CD4-positive, alpha-beta memory T cell (primary cell): ENCODE measurements at regions of chr7 and their contacts with region 1.

Region 1: DNA sequence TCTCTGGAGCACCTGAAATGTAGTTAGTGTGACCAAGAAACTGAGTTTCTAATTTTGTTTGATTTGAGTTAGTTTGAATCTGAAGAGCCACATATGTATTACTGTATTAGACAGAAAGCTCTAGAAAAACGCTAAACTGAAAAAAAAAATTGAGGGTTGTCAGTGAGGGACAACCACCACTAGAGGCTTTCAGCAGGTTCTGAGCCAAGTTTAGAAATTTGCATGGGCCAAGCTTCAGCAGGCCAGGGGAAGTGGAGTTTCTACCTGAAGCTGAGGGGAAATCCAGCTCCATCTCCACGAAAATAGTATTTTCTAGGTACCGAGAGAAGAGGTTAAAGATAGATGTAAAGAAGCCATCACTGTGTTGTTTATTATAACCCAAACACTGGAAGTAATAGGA is 77.9 kb upstream of the PLXNA4 start:
- DNase-seq: peak in 1 of 5 donors; percentile 17
- H3K4me3 ChIP-seq: no peak overlapping the region
- H3K4me3 Mint-ChIP-seq: peak overlapping the region in 7 of 8 donors; percentile 27 to 78 (median 70)
- H3K27ac ChIP-seq: no peak overlapping the region
- H3K27ac Mint-ChIP-seq: peak overlapping the region in 4 of 7 donors; percentile 16 to 90 (median 66)
- H3K4me1 ChIP-seq: peaks cover 25% of the 10 kb centered on the region
- H3K4me1 Mint-ChIP-seq: peaks cover 24 to 37% (median 29%) of the 10 kb centered on the region in 4 donors
- H3K27me3 ChIP-seq: no peaks in the 10 kb centered on the region
- H3K27me3 Mint-ChIP-seq: no peaks in the 10 kb centered on the region

Region 2: GRCh38 chr7:131735101-131735500 is 919.0 kb before region 1 on chr7:
- CTCF ChIA-PET with region 1: no interaction called
- POLR2A ChIA-PET with region 1: no interaction called
- intact Hi-C with region 1: no loop called
- DNase-seq: no peak
- H3K4me3 ChIP-seq: no peak overlapping the region
- H3K4me3 Mint-ChIP-seq: no peak overlapping the region
- H3K27ac ChIP-seq: no peak overlapping the region
- H3K27ac Mint-ChIP-seq: no peak overlapping the region
- H3K4me1 ChIP-seq: no peaks in the 10 kb centered on the region
- H3K4me1 Mint-ChIP-seq: no peaks in the 10 kb centered on the region
- H3K27me3 ChIP-seq: no peaks in the 10 kb centered on the region
- H3K27me3 Mint-ChIP-seq: peaks cover 20 to 27% of the 10 kb centered on the region in 2 donors

Region 3: GRCh38 chr7:132633954-132634353 is 20.2 kb before region 1 on chr7:
- CTCF ChIA-PET with region 1: no interaction called
- POLR2A ChIA-PET with region 1: no interaction called
- intact Hi-C with region 1: no loop called
- DNase-seq: no peak
- H3K4me3 ChIP-seq: no peak overlapping the region
- H3K4me3 Mint-ChIP-seq: no peak overlapping the region
- H3K27ac ChIP-seq: no peak overlapping the region
- H3K27ac Mint-ChIP-seq: peak overlapping the region in 1 of 7 donors; percentile 81
- H3K4me1 ChIP-seq: no peaks in the 10 kb centered on the region
- H3K4me1 Mint-ChIP-seq: no peaks in the 10 kb centered on the region
- H3K27me3 ChIP-seq: no peaks in the 10 kb centered on the region
- H3K27me3 Mint-ChIP-seq: peaks cover 6 to 8% of the 10 kb centered on the region in 2 donors

Region 4: GRCh38 chr7:132666071-132666774 is 12.1 kb after region 1 on chr7:
- CTCF ChIA-PET with region 1: interaction called, 11 read pairs
- POLR2A ChIA-PET with region 1: interaction called, 23 read pairs
- intact Hi-C with region 1: no loop called
- DNase-seq: peak in 3 of 5 donors; percentile 27 to 39 (median 36)
- H3K4me3 ChIP-seq: peak overlapping the region in 1 of 2 donors; percentile 29
- H3K4me3 Mint-ChIP-seq: peak overlapping the region; percentile 37 to 87 (median 78)
- H3K27ac ChIP-seq: no peak overlapping the region
- H3K27ac Mint-ChIP-seq: peak overlapping the region; percentile 14 to 92 (median 85)
- H3K4me1 ChIP-seq: peaks cover 14% of the 10 kb centered on the region
- H3K4me1 Mint-ChIP-seq: peaks cover 9 to 18% (median 13%) of the 10 kb centered on the region in 4 donors
- H3K27me3 ChIP-seq: no peaks in the 10 kb centered on the region
- H3K27me3 Mint-ChIP-seq: no peaks in the 10 kb centered on the region

Region 5: GRCh38 chr7:132771301-132771730 is 117.2 kb after region 1 on chr7:
- CTCF ChIA-PET with region 1: interaction called, 3 read pairs
- POLR2A ChIA-PET with region 1: no interaction called
- intact Hi-C with region 1: loop called (anchors 1 kb)
- DNase-seq: peak in 4 of 5 donors; percentile 27 to 48 (median 38)
- H3K4me3 ChIP-seq: peak overlapping the region in 1 of 2 donors; percentile 3
- H3K4me3 Mint-ChIP-seq: peak overlapping the region; percentile 13 to 81 (median 59)
- H3K27ac ChIP-seq: peak overlapping the region; percentile 35
- H3K27ac Mint-ChIP-seq: peak overlapping the region; percentile 32 to 91 (median 84)
- H3K4me1 ChIP-seq: peaks cover 22% of the 10 kb centered on the region
- H3K4me1 Mint-ChIP-seq: peaks cover 11 to 27% (median 17%) of the 10 kb centered on the region in 4 donors
- H3K27me3 ChIP-seq: no peaks in the 10 kb centered on the region
- H3K27me3 Mint-ChIP-seq: peaks cover 0 to 4% of the 10 kb centered on the region in 2 donors

Region 6: DNA sequence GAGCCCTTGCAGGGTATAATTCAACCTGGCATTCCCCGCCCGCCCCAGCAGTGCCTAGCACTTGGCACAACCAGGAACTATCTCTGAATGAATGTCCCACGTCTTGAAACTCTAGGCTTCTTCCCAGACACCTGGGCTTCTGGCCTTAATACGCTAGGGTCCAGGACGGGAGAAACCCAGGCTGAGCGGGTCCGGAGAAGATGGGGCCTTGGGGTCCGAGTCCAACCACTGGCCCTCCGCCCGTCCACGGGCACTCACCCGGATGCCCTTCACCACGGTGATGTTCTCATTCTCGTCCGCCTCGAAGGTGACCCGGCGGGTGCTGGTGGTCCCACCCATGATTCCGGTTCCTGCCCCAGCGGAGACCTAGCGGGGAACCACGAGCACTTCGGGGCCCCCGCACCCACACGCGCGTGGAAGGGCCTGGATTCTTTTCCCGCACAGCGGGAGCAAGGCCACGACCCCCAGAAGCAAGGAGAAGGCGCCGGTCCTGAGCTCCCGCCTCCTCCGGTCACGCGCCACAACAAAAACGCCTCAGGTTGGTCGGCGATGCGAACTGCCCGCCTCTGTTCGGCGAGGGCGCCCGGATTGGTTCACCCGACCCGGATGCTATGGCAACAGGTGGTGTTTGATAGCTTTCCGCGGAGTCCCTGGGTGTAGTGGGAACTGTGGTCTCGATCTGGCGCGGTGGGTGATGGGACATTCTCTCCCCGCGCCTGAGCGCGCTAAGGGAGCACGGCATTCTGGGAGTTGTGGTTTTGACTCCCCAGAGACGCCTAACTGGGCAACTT is 427.6 kb after region 1 on chr7 and contains the start of gene CHCHD3:
- CTCF ChIA-PET with region 1: no interaction called
- POLR2A ChIA-PET with region 1: no interaction called
- intact Hi-C with region 1: loop called (anchors 10 kb)
- DNase-seq: peak; percentile 95 to 98 (median 95)
- H3K4me3 ChIP-seq: peak within 1 kb of the TSS; percentile 82 to 84
- H3K4me3 Mint-ChIP-seq: peak within 1 kb of the TSS; percentile 82 to 96 (median 92)
- H3K27ac ChIP-seq: peak within 1 kb of the TSS; percentile 92
- H3K27ac Mint-ChIP-seq: peak within 1 kb of the TSS; percentile 88 to 95 (median 95)
- H3K4me1 ChIP-seq: peaks cover 36% of the 10 kb centered on the region
- H3K4me1 Mint-ChIP-seq: peaks cover 17 to 40% (median 27%) of the 10 kb centered on the region in 4 donors
- H3K27me3 ChIP-seq: no peaks in the 10 kb centered on the region
- H3K27me3 Mint-ChIP-seq: no peaks in the 10 kb centered on the region
- total RNA-seq, gene CHCHD3: 25.2 to 25.7 TPM